ENCODE measurements at regions of chr12 and their contacts with region 1.

Region 1: DNA sequence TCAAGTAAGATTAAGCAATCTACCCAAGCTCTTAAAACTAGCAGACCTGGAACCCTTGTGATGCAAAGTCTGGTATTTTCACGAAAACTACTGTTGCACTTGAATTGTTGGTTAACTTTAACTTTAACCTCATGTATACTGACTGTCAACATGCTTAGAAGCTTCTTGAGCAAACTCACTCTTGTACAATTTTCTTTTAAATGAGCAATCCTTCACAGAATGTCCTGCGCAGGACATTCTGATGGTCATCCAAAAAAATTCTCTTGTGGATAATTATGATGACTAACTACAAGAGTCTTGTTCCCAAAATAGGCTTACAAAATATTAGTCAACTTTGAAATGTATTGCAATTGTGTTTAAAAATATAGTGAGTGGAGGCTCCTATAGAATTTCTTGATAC is 54.0 kb upstream of the PDE3A start:
- DNase-seq: no peak
- H3K4me3 ChIP-seq: no peak overlapping the region
- H3K4me3 Mint-ChIP-seq: no peak overlapping the region
- H3K27ac ChIP-seq: no peak overlapping the region
- H3K27ac Mint-ChIP-seq: no peak overlapping the region
- H3K4me1 ChIP-seq: no peaks in the 10 kb centered on the region
- H3K4me1 Mint-ChIP-seq: no peaks in the 10 kb centered on the region
- H3K27me3 ChIP-seq: no peaks in the 10 kb centered on the region
- H3K27me3 Mint-ChIP-seq: no peaks in the 10 kb centered on the region

Region 2: GRCh38 chr12:20300457-20300856 is 13.9 kb before region 1 on chr12:
- CTCF ChIA-PET with region 1: no interaction called
- POLR2A ChIA-PET with region 1: no interaction called
- intact Hi-C with region 1: no loop called
- DNase-seq: no peak
- H3K4me3 ChIP-seq: no peak overlapping the region
- H3K4me3 Mint-ChIP-seq: no peak overlapping the region
- H3K27ac ChIP-seq: no peak overlapping the region
- H3K27ac Mint-ChIP-seq: no peak overlapping the region
- H3K4me1 ChIP-seq: no peaks in the 10 kb centered on the region
- H3K4me1 Mint-ChIP-seq: no peaks in the 10 kb centered on the region
- H3K27me3 ChIP-seq: no peaks in the 10 kb centered on the region
- H3K27me3 Mint-ChIP-seq: no peaks in the 10 kb centered on the region

Region 3: DNA sequence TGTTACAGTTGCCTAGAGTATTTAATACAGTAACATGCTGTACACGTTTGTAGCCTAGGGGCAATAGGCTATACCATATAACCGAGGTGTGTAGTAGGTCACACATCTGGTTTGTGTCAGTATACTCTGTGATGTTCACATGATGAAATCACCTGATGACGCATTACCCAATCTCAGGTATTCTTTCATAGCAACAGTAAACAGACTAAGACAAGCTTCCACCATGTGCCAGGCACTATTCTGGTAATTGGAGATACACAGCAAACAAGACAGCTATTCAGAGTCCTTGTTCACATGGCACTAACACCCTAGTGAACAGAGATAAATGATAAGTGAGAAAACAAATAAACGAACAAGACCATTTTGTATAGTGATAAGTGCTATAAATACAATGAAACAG is 50.2 kb after region 1 on chr12:
- CTCF ChIA-PET with region 1: no interaction called
- POLR2A ChIA-PET with region 1: no interaction called
- intact Hi-C with region 1: loop called (anchors 1 kb)
- DNase-seq: no peak
- H3K4me3 ChIP-seq: no peak overlapping the region
- H3K4me3 Mint-ChIP-seq: no peak overlapping the region
- H3K27ac ChIP-seq: no peak overlapping the region
- H3K27ac Mint-ChIP-seq: no peak overlapping the region
- H3K4me1 ChIP-seq: no peaks in the 10 kb centered on the region
- H3K4me1 Mint-ChIP-seq: peaks cover 4 to 6% (median 5%) of the 10 kb centered on the region in 4 donors
- H3K27me3 ChIP-seq: no peaks in the 10 kb centered on the region
- H3K27me3 Mint-ChIP-seq: peaks cover 11 to 15% of the 10 kb centered on the region in 2 donors

Region 4: DNA sequence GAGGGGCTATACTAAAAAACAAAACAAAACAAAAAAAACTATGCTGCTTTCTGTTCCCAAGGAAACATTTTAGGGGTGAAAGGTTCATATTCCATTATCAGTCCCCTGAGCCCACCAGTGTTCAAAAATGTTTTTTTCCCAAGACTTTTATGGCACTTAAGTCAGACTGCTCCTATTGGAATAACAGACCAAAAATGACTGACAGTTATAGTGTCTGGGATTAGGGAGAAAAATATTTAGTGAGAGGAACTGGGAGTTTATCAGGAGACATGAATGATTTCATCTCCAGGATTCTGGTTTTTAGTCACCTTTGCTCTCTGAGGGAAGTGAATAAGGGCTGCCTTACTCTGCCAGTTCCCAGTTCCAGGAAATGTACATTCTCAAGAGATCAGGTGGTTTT is 122.0 kb after region 1 on chr12:
- CTCF ChIA-PET with region 1: no interaction called
- POLR2A ChIA-PET with region 1: no interaction called
- intact Hi-C with region 1: no loop called
- DNase-seq: no peak
- H3K4me3 ChIP-seq: no peak overlapping the region
- H3K4me3 Mint-ChIP-seq: no peak overlapping the region
- H3K27ac ChIP-seq: no peak overlapping the region
- H3K27ac Mint-ChIP-seq: no peak overlapping the region
- H3K4me1 ChIP-seq: no peaks in the 10 kb centered on the region
- H3K4me1 Mint-ChIP-seq: no peaks in the 10 kb centered on the region
- H3K27me3 ChIP-seq: no peaks in the 10 kb centered on the region
- H3K27me3 Mint-ChIP-seq: peaks cover 0 to 4% of the 10 kb centered on the region in 2 donors